ENCODE measurements at regions of chr7 and their contacts with region 1.

Region 1: GRCh38 chr7:88669913-88670312 is 89.6 kb upstream of the ZNF804B start:
- DNase-seq: no peak
- ATAC-seq: no peak
- H3K4me3 ChIP-seq: no peak overlapping the region
- H3K27ac ChIP-seq: no peak overlapping the region
- H3K4me1 ChIP-seq: no peaks in the 10 kb centered on the region; a peak in 1 of 5 replicates
- H3K27me3 ChIP-seq: no peaks in the 10 kb centered on the region
- CTCF ChIP-seq: no peak
- EP300 ChIP-seq: no peak
- POLR2A ChIP-seq: no peak
- RAD21 ChIP-seq: no peak

Region 2: DNA sequence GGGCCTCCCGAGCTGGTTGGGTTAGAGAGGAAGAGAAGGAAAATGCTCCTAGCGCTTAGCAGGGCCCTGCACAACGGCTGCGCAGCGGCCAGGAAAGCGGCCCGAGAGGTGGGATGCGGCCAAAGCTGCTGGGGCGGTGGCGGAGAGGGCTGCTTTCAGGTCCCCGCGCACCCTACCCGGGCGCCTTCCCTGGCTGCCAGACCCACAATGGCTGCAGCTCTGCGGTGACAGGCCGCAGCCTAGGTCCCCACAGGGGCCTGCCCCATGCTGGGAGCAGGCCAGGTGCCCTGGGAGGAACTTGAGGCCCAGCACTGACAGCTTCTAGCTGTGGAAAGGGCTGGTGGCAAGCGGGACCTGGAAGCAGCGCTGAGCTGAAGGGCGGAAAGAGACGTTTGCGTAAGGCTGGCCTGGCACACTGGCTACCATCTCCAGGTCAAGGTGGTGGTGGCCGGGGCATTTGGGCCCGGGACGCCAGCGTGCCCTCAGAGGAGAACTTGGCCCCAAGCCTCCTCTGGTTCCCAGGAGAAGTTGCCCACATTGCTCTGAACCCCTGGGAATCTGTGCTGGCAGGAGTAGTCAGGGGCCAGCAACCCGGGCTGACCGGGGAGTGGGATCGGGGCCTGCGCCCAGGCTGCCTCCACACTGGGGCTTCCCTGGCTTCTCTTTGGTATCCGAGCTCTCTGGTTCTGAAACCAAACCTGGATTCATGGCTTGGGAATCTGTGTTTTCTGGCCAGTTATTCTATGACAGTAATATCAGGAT is 16.7 kb after region 1 on chr7:
- CTCF ChIA-PET with region 1: no interaction called
- POLR2A ChIA-PET with region 1: no interaction called
- in situ Hi-C with region 1: no loop called
- intact Hi-C with region 1: loop called (anchors 1 kb)
- DNase-seq: no peak
- ATAC-seq: no peak
- H3K4me3 ChIP-seq: no peak overlapping the region
- H3K27ac ChIP-seq: no peak overlapping the region
- H3K4me1 ChIP-seq: peaks cover 18 to 52% of the 10 kb centered on the region in 2 experiments
- H3K27me3 ChIP-seq: no peaks in the 10 kb centered on the region
- CTCF ChIP-seq: no peak
- EP300 ChIP-seq: no peak
- POLR2A ChIP-seq: no peak
- RAD21 ChIP-seq: no peak